GM10248 (cell line): ENCODE measurements at regions of chr12 and their contacts with region 1.

Region 1: GRCh38 chr12:88946372-88946997 is 366.2 kb upstream of the KITLG start:
- DNase-seq: no peak
- CTCF ChIP-seq: no peak

Region 2: GRCh38 chr12:88960213-88960878 is 13.9 kb after region 1 on chr12:
- CTCF ChIA-PET with region 1: interaction called, 11 read pairs
- POLR2A ChIA-PET with region 1: no interaction called
- DNase-seq: no peak
- CTCF ChIP-seq: no peak